CD4-positive, alpha-beta T cell (primary cell): ENCODE measurements at regions of chr11 and their contacts with region 1.

Region 1: GRCh38 chr11:73760679-73761402 is at the start of gene RAB6A:
- DNase-seq: peak; percentile 98 to 100 (median 100)
- ATAC-seq: peak; percentile 90
- H3K4me3 ChIP-seq: peak within 1 kb of the TSS; percentile 93
- H3K4me3 Mint-ChIP-seq: peak within 1 kb of the TSS; percentile 84
- H3K27ac ChIP-seq: peak within 1 kb of the TSS; percentile 82 to 84
- H3K27ac Mint-ChIP-seq: peak within 1 kb of the TSS; percentile 83
- H3K4me1 ChIP-seq: peaks cover 13% of the 10 kb centered on the region
- H3K4me1 Mint-ChIP-seq: peaks cover 39% of the 10 kb centered on the region
- H3K27me3 ChIP-seq: no peaks in the 10 kb centered on the region
- H3K27me3 Mint-ChIP-seq: no peaks in the 10 kb centered on the region
- CTCF ChIP-seq: no peak
- total RNA-seq, gene RAB6A: 42.6 to 49.3 TPM

Region 2: GRCh38 chr11:73779084-73779902 is 18.5 kb after region 1 on chr11:
- CTCF ChIA-PET with region 1: interaction called, 35 read pairs
- POLR2A ChIA-PET with region 1: interaction called, 236 read pairs
- intact Hi-C with region 1: loop called (anchors 1 kb)
- DNase-seq: peak; percentile 95 to 99 (median 97)
- ATAC-seq: peak; percentile 95
- H3K4me3 ChIP-seq: peak overlapping the region; percentile 78
- H3K4me3 Mint-ChIP-seq: peak overlapping the region; percentile 95
- H3K27ac ChIP-seq: peak overlapping the region; percentile 95 to 99
- H3K27ac Mint-ChIP-seq: peak overlapping the region; percentile 99
- H3K4me1 ChIP-seq: peaks cover 13% of the 10 kb centered on the region
- H3K4me1 Mint-ChIP-seq: peaks cover 14% of the 10 kb centered on the region
- H3K27me3 ChIP-seq: no peaks in the 10 kb centered on the region
- H3K27me3 Mint-ChIP-seq: no peaks in the 10 kb centered on the region
- CTCF ChIP-seq: no peak

Region 3: GRCh38 chr11:73787643-73788537 is 27.0 kb after region 1 on chr11 and contains the start of gene MRPL48:
- CTCF ChIA-PET with region 1: interaction called, 6 read pairs
- POLR2A ChIA-PET with region 1: interaction called, 26 read pairs
- intact Hi-C with region 1: loop called in 1 of 2 experiments (anchors 5 kb)
- DNase-seq: peak; percentile 78 to 93 (median 84)
- ATAC-seq: peak; percentile 99
- H3K4me3 ChIP-seq: peak within 1 kb of the TSS; percentile 93
- H3K4me3 Mint-ChIP-seq: peak within 1 kb of the TSS; percentile 99
- H3K27ac ChIP-seq: peak within 1 kb of the TSS; percentile 80 to 87
- H3K27ac Mint-ChIP-seq: peak within 1 kb of the TSS; percentile 100
- H3K4me1 ChIP-seq: peaks cover 19% of the 10 kb centered on the region
- H3K4me1 Mint-ChIP-seq: peaks cover 31% of the 10 kb centered on the region
- H3K27me3 ChIP-seq: no peaks in the 10 kb centered on the region
- H3K27me3 Mint-ChIP-seq: no peaks in the 10 kb centered on the region
- CTCF ChIP-seq: no peak
- total RNA-seq, gene MRPL48: 9.5 to 10.1 TPM

Region 4: GRCh38 chr11:74357449-74357848 is 596.6 kb after region 1 on chr11:
- CTCF ChIA-PET with region 1: no interaction called
- POLR2A ChIA-PET with region 1: no interaction called
- intact Hi-C with region 1: no loop called
- DNase-seq: no peak
- ATAC-seq: no peak
- H3K4me3 ChIP-seq: no peak overlapping the region
- H3K4me3 Mint-ChIP-seq: no peak overlapping the region
- H3K27ac ChIP-seq: no peak overlapping the region
- H3K27ac Mint-ChIP-seq: no peak overlapping the region
- H3K4me1 ChIP-seq: no peaks in the 10 kb centered on the region
- H3K4me1 Mint-ChIP-seq: no peaks in the 10 kb centered on the region
- H3K27me3 ChIP-seq: no peaks in the 10 kb centered on the region
- H3K27me3 Mint-ChIP-seq: no peaks in the 10 kb centered on the region
- CTCF ChIP-seq: no peak

Region 5: GRCh38 chr11:74492974-74493790 is 732.3 kb after region 1 on chr11 and contains the start of gene LIPT2:
- CTCF ChIA-PET with region 1: no interaction called
- POLR2A ChIA-PET with region 1: interaction called, 11 read pairs
- intact Hi-C with region 1: loop called in 1 of 2 experiments (anchors 10 kb)
- DNase-seq: peak; percentile 94 to 99 (median 98)
- ATAC-seq: peak; percentile 95
- H3K4me3 ChIP-seq: peak within 1 kb of the TSS; percentile 66
- H3K4me3 Mint-ChIP-seq: peak within 1 kb of the TSS; percentile 91
- H3K27ac ChIP-seq: peak within 1 kb of the TSS; percentile 61 to 94
- H3K27ac Mint-ChIP-seq: peak within 1 kb of the TSS; percentile 86
- H3K4me1 ChIP-seq: peaks cover 12% of the 10 kb centered on the region
- H3K4me1 Mint-ChIP-seq: peaks cover 41% of the 10 kb centered on the region
- H3K27me3 ChIP-seq: no peaks in the 10 kb centered on the region
- H3K27me3 Mint-ChIP-seq: no peaks in the 10 kb centered on the region
- CTCF ChIP-seq: no peak
- total RNA-seq, gene LIPT2: 10.7 to 10.9 TPM